Caco-2 (cell line): ENCODE measurements at regions of chr1 and their contacts with region 1.

Region 1: DNA sequence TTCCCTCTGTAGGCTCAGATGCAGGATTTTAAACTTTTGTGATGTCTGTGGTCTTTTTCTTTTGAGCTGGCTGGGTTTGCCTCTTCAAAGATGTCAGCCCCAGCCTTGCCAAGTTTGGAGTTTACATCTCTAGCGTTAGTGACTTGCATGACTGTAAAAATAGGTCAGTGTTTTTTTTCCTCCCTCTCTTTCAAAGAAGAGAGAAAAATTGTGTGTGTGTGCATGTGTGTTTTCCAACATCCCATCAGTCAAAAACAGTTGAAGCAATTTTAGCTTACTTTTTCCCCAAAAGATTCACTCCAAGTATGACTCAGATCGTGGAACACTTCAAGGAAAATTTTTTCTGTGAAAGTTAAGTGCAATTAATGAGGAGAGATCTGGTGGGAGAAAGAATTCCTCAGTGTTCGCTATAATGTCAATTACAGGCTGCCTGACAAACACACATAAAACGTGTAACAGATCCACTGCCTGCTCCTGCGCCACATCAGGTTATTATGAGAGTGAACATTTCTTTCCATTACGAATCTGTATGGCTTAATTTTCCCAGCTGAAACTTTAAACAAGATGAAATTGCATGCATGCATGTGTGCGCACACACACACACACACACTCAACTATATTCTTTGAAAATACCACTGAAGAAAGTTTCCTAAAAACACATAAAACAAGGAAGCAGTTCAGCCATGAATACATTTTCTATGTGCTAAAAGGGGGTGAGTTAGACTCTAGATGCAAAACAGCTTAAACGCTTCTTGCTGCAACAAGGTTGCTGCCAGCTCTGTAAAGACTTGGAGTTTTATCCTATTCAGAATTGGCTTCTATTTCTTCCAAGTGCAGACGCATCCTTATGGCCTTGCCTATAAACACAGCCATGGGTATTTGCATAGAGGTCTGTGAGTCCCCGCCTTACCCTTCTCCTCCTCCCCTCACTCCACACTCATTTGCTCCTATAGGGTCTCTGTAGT is 55.5 kb downstream of the TLR5 start:
- DNase-seq: no peak
- H3K4me3 ChIP-seq: no peak overlapping the region
- H3K4me3 Mint-ChIP-seq: no peak overlapping the region
- H3K27ac Mint-ChIP-seq: no peak overlapping the region
- H3K4me1 ChIP-seq: peaks cover 7% of the 10 kb centered on the region; the same call in 1 of the 2 replicates
- H3K4me1 Mint-ChIP-seq: peaks cover 27% of the 10 kb centered on the region
- H3K27me3 ChIP-seq: no peaks in the 10 kb centered on the region
- H3K27me3 Mint-ChIP-seq: no peaks in the 10 kb centered on the region
- CTCF ChIP-seq: no peak

Region 2: DNA sequence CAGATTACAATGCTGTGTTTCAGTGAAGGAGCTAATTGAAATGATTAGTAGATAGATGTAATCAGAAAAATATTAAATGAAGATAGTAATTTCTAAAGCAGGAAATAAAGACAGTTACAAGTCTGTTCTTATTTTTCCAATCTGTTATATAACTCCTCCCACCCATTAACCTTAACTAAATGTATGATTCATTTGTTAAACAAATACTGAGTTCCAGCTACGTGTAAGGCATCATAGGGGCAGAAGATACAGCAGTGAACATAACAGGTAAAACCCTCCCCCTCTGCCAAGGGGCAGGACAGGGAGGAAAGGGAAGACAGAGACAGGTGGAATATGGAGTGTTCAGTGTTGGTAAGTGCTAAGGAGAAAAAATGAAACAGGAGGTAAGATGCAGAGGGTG is 350.6 kb before region 1 on chr1 and contains the start of gene FAM177B:
- CTCF ChIA-PET with region 1: interaction called, 13 read pairs
- POLR2A ChIA-PET with region 1: no interaction called
- intact Hi-C with region 1: no loop called
- DNase-seq: no peak
- H3K4me3 ChIP-seq: no peak within 1 kb of the TSS
- H3K4me3 Mint-ChIP-seq: no peak within 1 kb of the TSS
- H3K27ac Mint-ChIP-seq: no peak within 1 kb of the TSS
- H3K4me1 ChIP-seq: no peaks in the 10 kb centered on the region; the same call in 1 of the 2 replicates
- H3K4me1 Mint-ChIP-seq: no peaks in the 10 kb centered on the region
- H3K27me3 ChIP-seq: no peaks in the 10 kb centered on the region
- H3K27me3 Mint-ChIP-seq: no peaks in the 10 kb centered on the region
- CTCF ChIP-seq: no peak
- total RNA-seq, gene FAM177B: 0.70 TPM in 1 of 2 replicates, not detected in the other

Region 3: DNA sequence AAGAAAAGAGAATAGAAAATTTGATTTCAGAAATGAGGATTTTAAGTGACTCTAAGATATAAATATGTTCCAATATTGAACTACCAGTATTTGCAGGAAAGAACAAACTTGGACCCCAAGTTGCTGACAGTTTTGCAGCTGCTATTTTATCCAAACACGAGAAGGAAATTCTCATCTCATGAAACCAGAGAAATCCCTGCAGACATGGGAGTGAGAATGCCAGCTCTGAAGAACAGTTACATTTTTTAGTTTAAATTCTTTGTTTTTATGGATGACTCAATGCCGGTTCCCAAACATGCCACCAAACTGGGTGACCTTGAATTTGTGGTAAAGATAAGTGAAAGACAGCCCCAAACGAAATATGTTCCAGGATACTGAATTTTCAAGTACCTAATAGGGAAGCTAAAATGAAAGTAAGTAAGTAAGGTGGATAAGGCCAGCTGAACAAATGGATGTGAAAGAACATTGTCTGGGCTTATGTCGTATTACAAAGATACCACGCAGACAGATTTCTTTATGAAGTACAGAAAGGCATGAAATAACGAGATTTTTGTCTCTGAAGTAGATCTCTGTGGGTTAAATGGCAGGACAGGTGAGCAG is 35.5 kb after region 1 on chr1:
- CTCF ChIA-PET with region 1: interaction called, 20 read pairs
- POLR2A ChIA-PET with region 1: no interaction called
- intact Hi-C with region 1: loop called (anchors 2 kb)
- DNase-seq: no peak
- H3K4me3 ChIP-seq: no peak overlapping the region
- H3K4me3 Mint-ChIP-seq: peak overlapping the region; percentile 49
- H3K27ac Mint-ChIP-seq: no peak overlapping the region
- H3K4me1 ChIP-seq: peaks cover 29% of the 10 kb centered on the region
- H3K4me1 Mint-ChIP-seq: peaks cover 20% of the 10 kb centered on the region
- H3K27me3 ChIP-seq: no peaks in the 10 kb centered on the region
- H3K27me3 Mint-ChIP-seq: no peaks in the 10 kb centered on the region
- CTCF ChIP-seq: no peak